GM13976 (cell line): ENCODE measurements at regions of chr2 and their contacts with region 1.

Region 1: GRCh38 chr2:42959234-42960001 is 167.0 kb upstream of the HAAO start:
- DNase-seq: no peak
- CTCF ChIP-seq: no peak

Region 2: DNA sequence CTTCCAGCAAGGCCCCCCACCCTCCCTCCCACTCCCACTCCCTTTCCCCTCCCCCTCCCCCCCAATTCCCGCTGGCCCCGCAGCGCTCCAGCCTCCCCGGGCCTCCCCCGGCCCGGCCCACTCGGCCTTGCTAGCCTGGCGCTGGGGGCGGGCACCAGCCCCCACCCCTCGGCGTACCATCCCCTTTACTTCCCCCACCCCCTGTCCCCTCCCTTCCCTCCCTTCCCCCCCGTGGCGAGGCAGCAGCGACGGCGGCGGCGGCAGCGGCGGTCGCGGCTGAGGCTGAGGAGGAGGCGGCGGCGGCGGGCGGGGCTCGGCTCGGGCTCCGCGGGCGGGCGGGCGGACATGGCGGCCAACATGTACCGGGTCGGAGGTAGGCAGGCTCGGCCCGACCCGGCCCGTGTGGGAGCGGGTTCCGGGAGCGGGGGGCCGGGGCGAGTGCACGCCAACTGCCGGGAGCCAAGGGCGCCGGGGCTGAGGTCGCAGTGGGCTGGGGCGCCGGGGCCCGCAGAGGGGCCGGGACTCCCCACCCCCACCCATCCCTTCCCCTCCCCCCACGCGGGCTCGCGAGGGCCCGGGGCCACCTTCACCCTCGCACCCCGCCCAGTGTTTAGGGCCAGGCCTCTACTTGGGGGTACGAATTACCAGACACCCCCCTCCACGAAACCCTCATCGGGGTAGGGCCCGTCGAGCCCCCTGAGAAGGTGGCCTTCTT is 390.9 kb before region 1 on chr2 and contains the start of gene MTA3:
- in situ Hi-C with region 1: no loop called
- DNase-seq: peak; percentile 76
- CTCF ChIP-seq: no peak

Region 3: GRCh38 chr2:43239981-43240761 is 280.8 kb after region 1 on chr2:
- in situ Hi-C with region 1: loop called (anchors 10 kb)
- DNase-seq: peak; percentile 76
- CTCF ChIP-seq: no peak

Region 4: GRCh38 chr2:43251171-43251731 is 291.8 kb after region 1 on chr2:
- in situ Hi-C with region 1: no loop called
- DNase-seq: no peak
- CTCF ChIP-seq: no peak